ENCODE measurements at regions of chr9 and their contacts with region 1.

Region 1: GRCh38 chr9:116737152-116737546 is 50.0 kb downstream of the TRIM32 start:
- DNase-seq: peak; percentile 96
- H3K27ac ChIP-seq: no peak overlapping the region
- CTCF ChIP-seq: peak; percentile 99

Region 2: DNA sequence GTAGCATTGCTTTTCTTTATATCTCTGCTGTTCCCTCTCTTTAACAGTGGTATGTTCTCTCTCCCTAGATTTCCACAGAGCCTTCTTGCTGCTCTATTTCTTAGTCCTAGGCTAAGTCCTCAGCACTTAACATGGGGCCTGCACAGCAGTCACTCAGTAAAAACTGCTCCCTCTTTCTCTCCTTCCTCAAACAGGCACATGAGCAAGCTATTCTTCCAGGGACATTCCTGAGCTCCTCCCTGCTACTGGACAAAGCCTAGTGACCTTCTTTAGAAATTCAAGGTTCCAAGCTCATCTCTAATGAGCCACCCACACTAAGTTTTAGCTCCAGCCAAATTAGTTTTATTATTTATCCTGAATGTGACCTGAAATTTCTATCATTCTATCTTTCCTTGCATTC is 10.5 kb before region 1 on chr9:
- CTCF ChIA-PET with region 1: interaction called, 17 read pairs
- POLR2A ChIA-PET with region 1: no interaction called
- DNase-seq: no peak
- H3K27ac ChIP-seq: no peak overlapping the region
- CTCF ChIP-seq: no peak

Region 3: DNA sequence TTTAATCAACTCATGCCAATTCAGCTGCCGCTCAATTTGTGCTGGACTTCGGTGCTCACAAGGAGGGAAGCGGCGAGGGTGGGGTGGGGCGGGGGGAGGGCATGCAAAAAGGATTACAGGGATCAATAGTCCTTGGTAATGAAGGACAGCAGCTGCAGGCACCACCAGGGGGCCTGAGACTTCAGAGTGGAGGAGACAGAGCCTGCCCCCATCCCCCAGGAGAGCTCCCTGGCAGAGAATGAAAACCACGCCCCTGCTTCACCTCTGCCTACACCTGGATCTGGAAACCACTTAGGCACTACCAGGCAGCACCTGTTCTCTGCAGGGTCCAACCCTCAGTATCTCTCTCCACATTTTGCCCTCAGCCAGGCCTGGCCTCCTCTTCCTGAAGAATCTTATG is 105.5 kb after region 1 on chr9:
- CTCF ChIA-PET with region 1: interaction called, 11 read pairs
- POLR2A ChIA-PET with region 1: no interaction called
- DNase-seq: no peak
- H3K27ac ChIP-seq: peak overlapping the region; percentile 4; the same call in 1 of the 2 replicates
- CTCF ChIP-seq: no peak

Region 4: GRCh38 chr9:116860509-116861120 is 123.5 kb after region 1 on chr9:
- CTCF ChIA-PET with region 1: interaction called, 116 read pairs
- POLR2A ChIA-PET with region 1: no interaction called
- DNase-seq: peak; percentile 84
- H3K27ac ChIP-seq: no peak overlapping the region
- CTCF ChIP-seq: peak; percentile 92

Region 5: DNA sequence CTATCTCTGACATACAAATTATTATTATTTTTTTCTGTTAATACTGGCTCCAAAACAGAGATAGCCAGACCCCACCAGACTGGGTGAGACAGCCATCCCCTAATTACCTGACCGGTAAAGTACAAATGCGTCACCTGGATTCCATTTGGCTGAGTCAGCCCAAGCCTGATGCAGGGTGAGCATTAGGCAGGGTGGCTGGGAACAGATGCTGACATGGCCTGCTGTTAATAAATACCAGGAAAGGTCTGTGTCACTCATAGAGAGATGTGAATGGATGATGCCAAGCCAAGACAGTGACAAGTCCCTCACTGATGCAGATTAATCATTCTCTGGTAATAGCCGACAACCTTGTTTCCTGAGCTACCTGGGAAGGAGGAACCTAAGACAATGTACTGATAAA is 133.4 kb after region 1 on chr9:
- CTCF ChIA-PET with region 1: interaction called, 11 read pairs
- POLR2A ChIA-PET with region 1: no interaction called
- DNase-seq: peak; percentile 99
- H3K27ac ChIP-seq: peak overlapping the region; percentile 56
- CTCF ChIP-seq: no peak

Region 6: DNA sequence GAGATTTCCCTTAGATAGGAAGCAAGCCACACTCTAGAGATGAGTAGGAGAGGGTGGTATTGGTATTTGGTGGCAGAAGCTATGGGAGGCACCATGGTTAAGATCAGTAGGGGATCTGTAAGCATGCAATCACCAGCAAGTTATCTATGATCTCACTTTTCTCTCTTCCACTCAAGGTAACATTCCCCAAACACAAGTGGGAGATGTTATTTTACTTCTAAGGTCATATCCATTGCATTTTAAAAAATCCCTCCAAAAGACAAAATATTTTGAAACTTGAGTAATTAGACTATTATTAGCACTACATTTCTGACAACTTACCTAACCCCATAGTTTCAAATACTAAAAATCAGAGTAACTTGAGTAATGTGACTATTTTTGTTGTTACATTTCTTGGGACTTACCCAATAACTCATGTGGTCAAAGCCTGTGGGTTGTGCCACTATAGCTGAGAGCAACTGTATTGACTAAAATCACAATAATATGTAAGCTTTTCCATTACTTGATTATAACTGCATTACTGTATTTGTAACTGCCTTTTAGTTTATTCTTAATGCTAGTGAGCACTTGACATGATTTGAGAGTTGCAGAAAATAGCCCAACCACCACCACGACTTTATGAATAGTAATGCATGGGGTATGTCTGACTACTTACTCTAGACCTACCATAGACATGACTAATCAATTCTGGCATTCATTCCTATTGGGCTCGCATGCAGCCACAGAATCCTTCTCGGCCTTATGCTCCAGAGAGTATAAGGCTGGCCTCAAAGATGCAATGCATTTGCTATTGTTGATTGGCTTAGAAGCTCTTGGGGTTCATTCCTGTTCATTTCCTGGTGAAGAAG is 214.7 kb after region 1 on chr9:
- CTCF ChIA-PET with region 1: interaction called, 18 read pairs
- POLR2A ChIA-PET with region 1: no interaction called
- DNase-seq: peak; percentile 88
- H3K27ac ChIP-seq: no peak overlapping the region
- CTCF ChIP-seq: no peak

Region 7: GRCh38 chr9:117414220-117414905 is 677.2 kb after region 1 on chr9:
- CTCF ChIA-PET with region 1: interaction called, 10 read pairs
- POLR2A ChIA-PET with region 1: no interaction called
- DNase-seq: peak; percentile 30
- H3K27ac ChIP-seq: no peak overlapping the region
- CTCF ChIP-seq: no peak

Measured in RWPE1 (cell line).